ENCODE measurements at regions of chr3 and their contacts with region 1.

Region 1: DNA sequence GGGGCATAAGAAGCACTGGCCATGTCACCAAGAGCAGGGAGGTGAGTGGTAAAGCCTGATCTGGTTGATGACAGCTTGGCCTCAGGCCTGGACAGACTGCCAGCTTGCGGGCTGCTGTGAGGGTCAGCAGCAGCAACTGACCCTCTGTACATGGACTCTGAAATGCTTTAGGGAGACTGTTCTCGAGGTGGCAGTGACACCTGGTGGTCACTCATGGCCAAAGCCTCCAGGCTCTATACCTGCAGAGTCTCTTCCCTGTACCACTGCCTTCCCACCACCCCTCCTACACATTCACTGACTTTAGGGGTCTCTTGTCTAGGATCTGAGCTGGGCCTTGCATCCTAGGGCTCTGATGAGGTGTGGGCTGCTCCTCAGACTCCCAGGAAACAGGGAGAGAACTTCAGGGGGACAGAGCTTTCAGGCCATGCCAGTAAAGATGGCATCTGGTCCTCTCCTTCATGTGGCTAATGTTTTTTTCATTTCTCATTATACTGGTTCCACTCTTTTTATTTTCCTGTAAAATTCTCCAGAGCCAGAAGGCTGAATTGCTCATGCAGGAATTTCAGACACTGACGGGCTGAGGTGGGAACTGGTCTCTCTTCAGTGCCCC is 17.2 kb upstream of the TIMP4 start:
- DNase-seq: peak; percentile 52
- H3K4me3 ChIP-seq: no peak overlapping the region
- H3K27ac ChIP-seq: no peak overlapping the region
- H3K4me1 ChIP-seq: peaks cover 32% of the 10 kb centered on the region
- H3K27me3 ChIP-seq: no peaks in the 10 kb centered on the region
- CTCF ChIP-seq: peak; percentile 68 to 90
- POLR2A ChIP-seq: no peak

Region 2: DNA sequence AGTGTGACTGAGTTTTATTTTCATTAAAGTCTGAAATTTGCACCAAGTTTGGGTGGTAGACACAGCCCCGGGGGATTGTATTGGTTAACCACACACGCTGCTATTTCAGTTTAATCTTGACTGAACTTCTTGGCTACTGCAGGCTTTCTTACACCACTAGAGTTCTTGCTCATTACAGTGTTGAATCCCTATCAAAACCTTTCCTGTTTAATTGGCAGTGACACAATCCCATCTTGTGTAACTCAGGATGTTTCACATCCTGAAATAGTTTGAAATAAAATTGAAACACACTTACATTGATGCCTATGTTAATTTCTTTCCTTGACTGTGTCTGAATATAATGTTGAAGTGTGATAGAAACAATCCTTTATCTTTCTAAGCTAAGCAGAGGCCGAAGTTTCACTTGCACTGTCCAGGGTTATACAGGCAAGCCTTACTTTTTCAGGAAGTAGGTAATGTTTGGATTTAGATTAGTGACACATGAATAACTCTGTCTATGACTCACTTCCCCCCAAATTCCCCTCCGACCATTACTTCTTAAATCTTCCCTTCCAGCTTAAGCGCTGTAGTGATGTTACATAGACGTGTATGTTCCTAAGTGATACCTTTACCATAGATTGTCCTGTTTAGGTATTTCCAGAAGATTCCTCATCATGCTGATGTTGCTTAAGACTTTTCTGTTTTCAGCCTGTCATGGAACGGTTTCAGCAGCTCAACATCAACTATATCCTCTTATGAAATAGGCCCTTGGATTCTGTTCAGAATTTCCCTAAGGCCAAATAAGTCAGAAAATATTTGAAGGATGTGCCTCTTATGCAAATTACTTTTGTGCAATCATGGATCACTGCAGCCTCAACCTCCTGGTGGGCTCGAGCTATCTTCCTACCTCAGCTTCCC is 886.9 kb before region 1 on chr3:
- CTCF ChIA-PET with region 1: no interaction called
- POLR2A ChIA-PET with region 1: no interaction called
- dilution Hi-C with region 1: no loop called
- intact Hi-C with region 1: no loop called
- DNase-seq: peak; percentile 95
- H3K4me3 ChIP-seq: peak overlapping the region in 1 of 3 experiments; percentile 43
- H3K27ac ChIP-seq: peak overlapping the region; percentile 98
- H3K4me1 ChIP-seq: peaks cover 50% of the 10 kb centered on the region
- H3K27me3 ChIP-seq: no peaks in the 10 kb centered on the region
- CTCF ChIP-seq: no peak
- POLR2A ChIP-seq: peak; percentile 64

Region 3: DNA sequence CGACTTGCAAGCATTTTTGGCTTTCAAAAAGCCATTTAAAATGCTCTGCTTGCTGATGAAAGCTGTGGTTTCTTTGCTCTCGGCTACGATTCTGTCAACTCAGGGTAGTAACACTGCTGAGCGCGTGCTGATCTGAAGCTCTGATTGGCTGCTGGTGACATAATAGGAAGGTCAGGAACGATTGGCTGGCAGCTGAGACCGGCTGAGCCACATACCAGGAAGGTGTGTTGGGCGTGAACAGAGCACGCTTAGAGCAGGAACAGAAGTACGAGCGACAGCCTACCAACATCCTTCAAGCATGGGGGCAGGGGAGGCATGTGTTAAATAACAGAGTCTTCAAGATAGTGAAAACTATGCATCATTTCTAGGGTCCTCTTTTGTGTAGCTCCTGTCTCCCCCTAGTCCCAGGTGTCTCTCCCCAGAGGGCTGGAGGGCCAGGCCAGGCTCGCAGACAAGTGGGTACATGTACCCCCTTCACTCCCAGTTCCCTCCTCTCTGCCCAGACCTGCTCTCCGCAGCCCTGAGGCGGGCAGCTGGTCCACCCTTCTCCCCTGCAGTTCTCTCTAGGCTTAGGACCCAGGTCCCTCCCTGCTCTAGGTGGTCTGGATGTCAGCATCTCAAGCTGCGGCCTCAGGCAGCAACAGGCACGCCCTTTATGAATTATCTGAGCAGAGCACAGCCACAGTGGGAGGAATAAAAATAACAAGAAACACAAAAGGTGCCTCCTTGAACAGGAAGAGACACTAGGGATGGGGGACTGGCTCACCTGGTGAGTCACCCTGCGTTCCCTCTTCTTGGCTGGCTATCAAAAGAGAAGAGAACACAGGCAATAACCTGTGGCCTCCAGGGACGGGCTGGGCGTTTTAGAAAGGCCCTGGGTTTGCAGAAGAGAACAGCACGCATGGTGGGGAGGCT is 405.2 kb before region 1 on chr3:
- CTCF ChIA-PET with region 1: no interaction called
- POLR2A ChIA-PET with region 1: no interaction called
- dilution Hi-C with region 1: no loop called
- intact Hi-C with region 1: loop called (anchors 5 kb)
- DNase-seq: peak; percentile 85
- H3K4me3 ChIP-seq: no peak overlapping the region
- H3K27ac ChIP-seq: no peak overlapping the region
- H3K4me1 ChIP-seq: peaks cover 11% of the 10 kb centered on the region
- H3K27me3 ChIP-seq: no peaks in the 10 kb centered on the region
- CTCF ChIP-seq: no peak
- POLR2A ChIP-seq: no peak

Region 4: DNA sequence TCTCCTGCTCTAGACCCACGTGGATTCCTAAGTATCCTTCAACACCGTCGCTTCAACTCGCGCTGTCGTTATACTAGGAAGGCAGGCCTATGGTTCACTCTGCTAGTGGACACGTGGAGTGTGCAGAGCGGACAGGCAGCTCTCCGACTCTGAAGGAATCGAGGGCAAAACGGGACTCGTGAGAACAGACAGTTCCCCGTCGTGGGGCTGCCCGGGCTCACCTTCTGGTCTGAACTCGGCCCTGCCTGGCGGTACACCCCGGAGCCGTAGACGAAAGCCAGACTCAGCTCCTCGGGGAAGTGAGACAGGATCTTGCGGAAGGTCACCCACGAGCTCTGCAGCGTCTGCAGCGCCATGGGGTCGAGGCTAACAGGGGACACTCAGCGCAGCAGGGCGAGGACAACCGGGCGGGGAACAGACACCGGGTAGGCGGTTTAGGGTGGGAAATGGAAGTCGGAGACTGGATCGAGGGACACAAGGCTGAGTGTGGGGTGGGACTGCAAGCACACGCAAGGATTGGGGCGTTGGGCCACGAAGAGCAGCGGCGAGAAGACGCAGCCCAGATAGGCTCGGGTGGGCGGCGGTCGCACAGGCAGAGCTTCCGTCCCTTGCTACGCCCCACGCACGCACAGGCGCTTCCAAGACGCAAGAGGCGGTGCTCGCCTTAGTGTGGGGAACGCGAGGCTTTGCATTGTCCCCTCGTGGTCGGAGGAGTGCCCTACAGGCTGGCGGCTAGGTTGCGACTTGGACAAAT is 329.5 kb before region 1 on chr3 and contains the start of gene TAMM41:
- CTCF ChIA-PET with region 1: interaction called, 3 read pairs
- POLR2A ChIA-PET with region 1: no interaction called
- dilution Hi-C with region 1: no loop called
- intact Hi-C with region 1: loop called (anchors 2 kb)
- DNase-seq: peak; percentile 91
- H3K4me3 ChIP-seq: peak within 1 kb of the TSS; percentile 36 to 66 (median 60)
- H3K27ac ChIP-seq: no peak within 1 kb of the TSS
- H3K4me1 ChIP-seq: peaks cover 15% of the 10 kb centered on the region
- H3K27me3 ChIP-seq: peaks cover 3 to 5% of the 10 kb centered on the region in 2 experiments
- CTCF ChIP-seq: peak; percentile 70 to 89
- POLR2A ChIP-seq: peak; percentile 95
- total RNA-seq, gene TAMM41: 25.1 and 29.7 TPM in 2 replicates

Region 5: DNA sequence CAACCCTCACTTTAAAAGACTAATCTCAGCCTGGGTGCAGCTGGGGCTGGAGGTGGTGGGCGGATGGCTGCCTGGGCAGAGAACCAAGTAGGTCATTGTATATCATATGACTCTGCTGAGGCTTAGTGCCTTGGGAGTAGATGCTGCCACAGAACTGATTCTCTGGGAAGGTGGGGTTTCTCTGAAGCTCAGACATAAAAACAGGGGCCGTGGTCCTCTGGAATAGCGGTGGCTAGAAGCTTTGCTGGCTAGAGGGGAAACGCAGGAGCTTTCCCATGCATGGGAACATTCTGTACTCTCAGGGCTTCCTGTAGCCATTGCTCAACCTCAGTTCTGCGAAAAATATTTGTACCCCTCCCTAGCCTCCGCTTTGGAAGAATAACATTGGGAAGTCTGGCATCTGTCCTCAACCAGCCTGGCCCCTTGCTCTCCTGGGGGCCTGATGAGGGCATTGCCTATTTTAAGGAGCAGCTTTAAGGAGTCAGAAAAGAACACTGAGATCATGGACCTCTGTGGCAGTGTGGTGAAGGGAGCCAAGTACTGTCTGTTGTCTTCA is 31.9 kb before region 1 on chr3:
- CTCF ChIA-PET with region 1: interaction called, 175 read pairs
- POLR2A ChIA-PET with region 1: no interaction called
- dilution Hi-C with region 1: no loop called
- intact Hi-C with region 1: no loop called
- DNase-seq: no peak
- H3K4me3 ChIP-seq: no peak overlapping the region
- H3K27ac ChIP-seq: no peak overlapping the region
- H3K4me1 ChIP-seq: no peaks in the 10 kb centered on the region
- H3K27me3 ChIP-seq: peaks cover 5 to 8% of the 10 kb centered on the region in 2 experiments
- CTCF ChIP-seq: no peak
- POLR2A ChIP-seq: no peak

Region 6: DNA sequence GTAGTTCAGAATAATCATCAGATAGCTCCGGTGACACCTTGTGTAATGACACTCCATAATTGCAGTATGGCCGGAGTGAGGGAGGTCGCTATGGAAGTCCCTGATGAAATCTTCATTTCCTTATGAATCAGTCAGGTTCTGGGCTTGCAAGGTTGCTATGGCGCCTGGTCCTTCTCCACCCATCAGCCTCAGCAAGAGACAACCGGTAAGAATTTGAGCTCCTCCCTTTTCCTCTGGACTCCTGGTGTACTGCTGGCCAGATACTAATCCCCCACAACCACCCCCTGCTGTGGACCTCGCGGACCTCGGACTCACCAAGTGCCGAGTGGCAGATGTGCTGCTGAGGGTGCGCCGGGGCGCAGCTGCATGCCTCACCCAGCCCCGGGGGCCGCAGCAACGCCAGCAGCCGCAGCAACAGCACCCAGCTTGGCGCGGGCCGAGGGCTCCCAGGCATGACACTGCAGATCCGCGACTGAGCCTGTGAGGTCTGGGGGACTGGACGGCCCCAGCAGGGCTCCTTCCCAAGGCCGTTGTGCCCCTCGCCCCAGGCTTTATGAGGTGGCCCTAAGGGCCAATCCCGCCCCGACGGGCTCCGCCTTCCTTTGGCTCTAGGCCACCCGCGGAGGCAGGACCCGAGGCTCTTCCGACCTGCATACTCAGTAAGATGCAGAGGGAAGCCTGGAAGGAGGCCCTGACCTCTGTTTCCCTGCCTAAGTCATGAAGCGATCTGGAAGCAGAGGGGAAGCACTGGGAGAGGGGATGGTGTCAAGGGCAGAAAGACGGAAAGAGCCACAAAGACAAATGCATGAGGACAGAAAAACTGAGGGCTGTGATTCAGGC is 17.3 kb before region 1 on chr3 and contains the start of gene TIMP4:
- CTCF ChIA-PET with region 1: interaction called, 18 read pairs
- POLR2A ChIA-PET with region 1: no interaction called
- dilution Hi-C with region 1: no loop called
- intact Hi-C with region 1: no loop called
- DNase-seq: no peak
- H3K4me3 ChIP-seq: no peak within 1 kb of the TSS
- H3K27ac ChIP-seq: no peak within 1 kb of the TSS
- H3K4me1 ChIP-seq: no peaks in the 10 kb centered on the region
- H3K27me3 ChIP-seq: peaks cover 3 to 7% of the 10 kb centered on the region in 2 experiments
- CTCF ChIP-seq: no peak
- POLR2A ChIP-seq: no peak
- total RNA-seq, gene TIMP4: 0.40 TPM in 1 of 2 replicates, not detected in the other

Region 7: GRCh38 chr3:12187448-12188327 is 11.7 kb after region 1 on chr3:
- CTCF ChIA-PET with region 1: interaction called, 33 read pairs
- POLR2A ChIA-PET with region 1: no interaction called
- dilution Hi-C with region 1: no loop called
- intact Hi-C with region 1: no loop called
- DNase-seq: peak; percentile 17
- H3K4me3 ChIP-seq: no peak overlapping the region
- H3K27ac ChIP-seq: no peak overlapping the region
- H3K4me1 ChIP-seq: peaks cover 12% of the 10 kb centered on the region
- H3K27me3 ChIP-seq: no peaks in the 10 kb centered on the region
- CTCF ChIP-seq: no peak
- POLR2A ChIP-seq: no peak

Region 8: DNA sequence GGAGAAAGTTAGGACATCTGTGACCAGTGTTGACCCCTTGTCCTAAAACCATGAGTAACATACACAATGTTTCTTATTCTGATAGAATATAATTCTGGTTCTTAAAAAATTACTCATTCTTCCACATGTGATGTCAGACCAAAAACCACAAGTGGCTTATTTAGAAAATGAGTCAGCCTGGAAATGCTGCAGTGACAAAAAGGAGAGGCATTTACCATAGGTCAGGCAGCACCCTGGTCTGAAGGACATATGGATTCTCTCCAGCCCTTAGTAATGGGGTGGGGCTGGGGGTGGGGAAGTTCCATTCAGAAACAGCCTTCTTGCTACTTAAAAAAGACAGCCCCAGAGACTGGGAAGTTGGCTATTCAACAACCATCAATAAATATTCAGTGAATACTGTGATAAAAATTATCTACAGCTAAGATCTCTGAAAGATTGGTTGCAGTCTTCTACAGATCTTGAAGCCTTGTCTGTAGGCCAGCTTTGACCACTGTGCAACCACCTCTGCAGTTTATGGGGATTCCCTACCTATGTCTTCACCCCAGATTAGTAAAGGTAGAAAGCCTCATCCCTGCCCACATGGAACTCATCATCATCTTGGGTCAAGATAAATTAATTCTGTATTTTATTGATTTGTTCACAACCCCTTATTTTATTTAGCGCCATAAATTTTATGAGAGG is 17.7 kb after region 1 on chr3:
- CTCF ChIA-PET with region 1: interaction called, 33 read pairs
- POLR2A ChIA-PET with region 1: no interaction called
- dilution Hi-C with region 1: no loop called
- intact Hi-C with region 1: loop called (anchors 1 kb)
- DNase-seq: peak; percentile 79
- H3K4me3 ChIP-seq: no peak overlapping the region
- H3K27ac ChIP-seq: peak overlapping the region; percentile 84
- H3K4me1 ChIP-seq: peaks cover 23% of the 10 kb centered on the region
- H3K27me3 ChIP-seq: no peaks in the 10 kb centered on the region
- CTCF ChIP-seq: no peak
- POLR2A ChIP-seq: no peak

Measured in endothelial cell of umbilical vein (primary cell).